ENCODE measurements at regions of chr15 and their contacts with region 1.

Region 1: GRCh38 chr15:31326156-31326732 is 391 bp upstream of the KLF13 start:
- DNase-seq: peak; percentile 72
- H3K4me3 ChIP-seq: peak overlapping the region; percentile 73
- CTCF ChIP-seq: no peak

Region 2: DNA sequence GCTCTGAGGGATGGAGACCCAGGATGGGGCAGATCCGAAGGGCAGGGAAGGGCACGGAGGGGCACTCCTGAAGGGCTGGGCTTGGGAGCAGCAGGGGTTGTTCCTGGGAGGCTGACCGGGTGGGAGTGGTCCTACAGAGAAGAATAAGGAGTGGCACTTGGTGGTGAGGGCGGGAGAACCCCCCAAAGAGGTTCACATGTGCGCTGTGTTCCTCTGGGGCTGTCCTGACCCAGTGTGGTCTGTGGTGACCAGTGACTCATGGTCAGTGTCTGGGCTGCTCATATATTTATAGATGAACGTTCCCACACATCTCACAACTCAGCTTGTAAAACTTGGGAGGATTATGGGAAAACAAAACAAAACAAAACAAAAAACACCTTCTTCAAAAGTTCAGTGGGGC is 234.8 kb before region 1 on chr15:
- CTCF ChIA-PET with region 1: no interaction called
- POLR2A ChIA-PET with region 1: no interaction called
- DNase-seq: peak; percentile 16
- H3K4me3 ChIP-seq: no peak overlapping the region
- CTCF ChIP-seq: no peak

Region 3: DNA sequence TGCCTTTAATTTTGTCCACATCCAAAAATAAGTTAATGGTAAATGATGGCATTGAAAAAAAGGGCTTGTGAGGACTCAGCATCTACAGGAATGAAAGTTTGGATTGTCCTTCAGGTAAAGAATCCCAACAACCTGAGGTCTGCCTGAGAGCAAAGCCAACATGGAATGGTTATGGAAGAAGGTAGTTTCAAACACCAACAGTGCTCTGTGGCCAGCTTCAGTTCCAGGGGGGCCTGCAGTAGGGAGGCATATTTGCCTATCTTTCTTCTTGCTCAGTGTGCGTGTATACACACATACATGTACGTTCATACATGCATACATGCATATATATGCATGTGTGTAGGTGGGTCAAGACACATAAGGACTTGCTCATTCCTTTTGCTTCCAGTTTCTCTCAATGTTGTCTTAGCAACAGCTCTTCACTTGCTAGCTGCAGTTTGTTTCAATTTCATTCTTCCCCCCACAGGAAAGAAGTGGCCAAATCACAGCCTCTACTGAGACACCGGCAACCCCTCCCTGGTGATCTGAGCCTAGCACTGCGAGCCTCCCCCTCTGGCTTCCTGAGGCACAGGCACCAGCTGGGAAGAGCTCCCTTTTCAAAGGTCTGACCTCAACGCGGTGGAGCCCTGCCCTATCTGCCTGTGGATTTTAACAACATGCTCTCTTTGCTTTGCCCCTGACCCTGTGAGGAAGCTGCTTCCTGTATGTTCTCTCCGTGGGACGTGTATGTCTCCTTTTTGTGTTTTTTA is 146.6 kb after region 1 on chr15:
- CTCF ChIA-PET with region 1: no interaction called
- POLR2A ChIA-PET with region 1: interaction called, 10 read pairs
- DNase-seq: no peak
- H3K4me3 ChIP-seq: no peak overlapping the region
- CTCF ChIP-seq: no peak

Measured in AG04449 (cell line).